BJ (cell line): ENCODE measurements at regions of chr5 and their contacts with region 1.

Region 1: DNA sequence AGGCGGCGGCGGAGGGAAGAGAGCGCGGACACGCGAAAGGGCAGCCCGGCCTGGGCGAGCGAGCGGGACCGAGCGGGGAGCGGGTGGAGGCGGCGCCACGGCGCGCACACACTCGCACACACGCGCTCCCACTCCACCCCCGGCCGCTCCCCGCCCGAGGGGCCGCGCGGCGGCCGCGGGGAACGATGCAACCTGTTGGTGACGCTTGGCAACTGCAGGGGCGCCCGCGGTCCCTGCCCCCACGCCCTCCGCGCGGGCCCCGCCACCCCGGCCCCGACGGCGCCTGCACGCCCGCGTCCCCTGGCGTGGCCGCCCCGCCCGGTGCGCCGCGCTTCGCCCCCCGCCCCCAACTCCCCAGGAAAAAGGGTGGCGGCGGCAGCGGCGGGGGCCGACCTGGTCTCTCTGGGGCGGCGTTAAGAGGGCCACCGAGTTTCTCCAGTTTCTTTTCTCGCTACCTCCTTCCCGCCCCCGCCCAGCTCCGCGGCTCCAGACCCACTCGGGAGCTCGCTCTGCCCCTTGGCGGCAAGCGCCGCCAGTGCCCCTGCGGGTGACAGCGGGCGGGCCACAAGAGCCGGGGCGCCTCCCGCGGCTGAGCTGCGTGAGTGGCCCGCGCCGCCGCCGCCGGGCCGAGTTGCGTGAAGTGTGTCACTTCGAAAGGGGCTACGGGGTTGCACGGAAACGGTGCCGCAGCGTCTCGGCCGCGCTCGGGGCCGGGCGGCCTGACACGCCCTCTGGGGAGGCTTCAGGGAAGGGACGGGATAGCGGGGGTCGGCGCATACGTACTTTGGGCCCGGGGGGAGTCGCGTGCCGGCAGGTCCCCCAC is at the start of gene NR3C1:
- DNase-seq: no peak
- H3K4me3 ChIP-seq: peak within 1 kb of the TSS; percentile 89
- H3K27me3 ChIP-seq: no peaks in the 10 kb centered on the region
- CTCF ChIP-seq: peak; percentile 33
- polyA plus RNA-seq, gene NR3C1: 22.4 and 33.7 TPM in 2 replicates

Region 2: GRCh38 chr5:142922223-142922952 is 481.4 kb before region 1 on chr5:
- CTCF ChIA-PET with region 1: interaction called, 13 read pairs
- POLR2A ChIA-PET with region 1: no interaction called
- DNase-seq: no peak
- H3K4me3 ChIP-seq: no peak overlapping the region
- H3K27me3 ChIP-seq: no peaks in the 10 kb centered on the region
- CTCF ChIP-seq: peak; percentile 35

Region 3: GRCh38 chr5:143063175-143063970 is 340.4 kb before region 1 on chr5:
- CTCF ChIA-PET with region 1: interaction called, 10 read pairs
- POLR2A ChIA-PET with region 1: interaction called, 8 read pairs
- DNase-seq: no peak
- H3K4me3 ChIP-seq: no peak overlapping the region
- H3K27me3 ChIP-seq: no peaks in the 10 kb centered on the region
- CTCF ChIP-seq: no peak

Region 4: GRCh38 chr5:143376911-143377813 is 26.6 kb before region 1 on chr5:
- CTCF ChIA-PET with region 1: no interaction called
- POLR2A ChIA-PET with region 1: no interaction called
- DNase-seq: peak; percentile 25
- H3K4me3 ChIP-seq: no peak overlapping the region
- H3K27me3 ChIP-seq: no peaks in the 10 kb centered on the region
- CTCF ChIP-seq: no peak

Region 5: GRCh38 chr5:143824851-143825720 is 421.3 kb after region 1 on chr5:
- CTCF ChIA-PET with region 1: interaction called, 22 read pairs
- POLR2A ChIA-PET with region 1: no interaction called
- DNase-seq: no peak
- H3K4me3 ChIP-seq: no peak overlapping the region
- H3K27me3 ChIP-seq: no peaks in the 10 kb centered on the region
- CTCF ChIP-seq: peak; percentile 92